A673 (cell line): ENCODE measurements at regions of chr7 and their contacts with region 1.

Region 1: DNA sequence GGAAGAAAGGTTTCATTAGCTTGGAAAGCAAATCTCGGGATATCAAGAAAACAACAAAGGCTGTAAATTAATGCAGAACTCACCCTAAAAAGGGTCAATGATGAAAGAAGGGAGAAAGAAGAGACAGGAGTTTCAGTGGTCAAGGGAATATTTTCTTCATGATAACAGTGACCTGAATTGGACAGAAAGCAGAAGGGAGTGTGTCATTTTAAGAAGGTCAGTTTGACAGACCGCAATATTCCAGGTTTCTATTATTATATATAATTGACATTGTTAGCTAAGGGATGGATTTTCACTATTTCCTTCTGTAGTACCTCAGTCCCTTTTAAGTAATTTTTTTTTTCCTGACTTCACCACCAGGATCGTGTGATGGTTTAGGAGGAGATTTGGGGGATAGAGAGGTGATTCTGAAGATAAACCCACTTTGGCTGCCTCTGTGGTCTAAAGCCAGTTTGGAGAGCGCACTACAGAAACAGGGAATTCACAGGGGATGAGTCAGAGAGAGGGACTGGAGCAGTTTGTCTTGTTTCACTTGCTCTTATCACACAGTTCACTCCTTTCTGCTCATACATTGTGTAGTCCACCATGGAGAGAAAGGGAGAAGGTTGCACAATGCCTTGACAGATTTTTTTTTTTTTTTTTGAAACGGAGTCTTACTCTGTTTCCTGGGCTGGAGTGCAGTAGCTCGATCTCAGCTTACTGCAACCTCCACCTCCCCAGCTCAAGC is 417.9 kb downstream of the AUTS2 start:
- DNase-seq: no peak
- H3K4me3 ChIP-seq: no peak overlapping the region
- H3K27ac ChIP-seq: no peak overlapping the region
- H3K4me1 ChIP-seq: no peaks in the 10 kb centered on the region
- H3K27me3 ChIP-seq: no peaks in the 10 kb centered on the region
- CTCF ChIP-seq: no peak

Region 2: GRCh38 chr7:69115788-69116187 is 900.4 kb before region 1 on chr7:
- CTCF ChIA-PET with region 1: no interaction called
- POLR2A ChIA-PET with region 1: interaction called, 15 read pairs
- intact Hi-C with region 1: no loop called
- DNase-seq: no peak
- H3K4me3 ChIP-seq: no peak overlapping the region
- H3K27ac ChIP-seq: no peak overlapping the region
- H3K4me1 ChIP-seq: no peaks in the 10 kb centered on the region
- H3K27me3 ChIP-seq: no peaks in the 10 kb centered on the region
- CTCF ChIP-seq: no peak

Region 3: DNA sequence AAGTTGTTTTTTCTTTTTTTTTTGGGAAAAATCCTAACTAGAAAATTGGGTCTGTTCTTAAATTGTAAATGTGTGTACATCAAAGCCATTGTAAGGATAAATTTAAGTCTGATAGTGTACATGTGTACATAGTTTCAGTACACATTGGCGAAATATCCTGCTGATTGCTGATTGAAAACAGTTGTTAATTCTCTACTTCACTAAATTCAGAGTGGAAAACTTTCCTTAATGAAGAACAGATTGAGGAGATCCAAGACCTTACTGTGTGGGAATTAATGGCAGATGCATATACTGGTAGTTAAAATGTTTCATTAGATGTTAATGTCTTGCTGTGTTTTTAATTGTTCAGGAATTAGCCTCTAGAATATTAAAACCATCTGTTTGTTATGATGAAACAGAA is 88.0 kb after region 1 on chr7:
- CTCF ChIA-PET with region 1: no interaction called
- POLR2A ChIA-PET with region 1: no interaction called
- intact Hi-C with region 1: no loop called
- DNase-seq: peak; percentile 38
- H3K4me3 ChIP-seq: no peak overlapping the region
- H3K27ac ChIP-seq: no peak overlapping the region
- H3K4me1 ChIP-seq: peaks cover 9% of the 10 kb centered on the region
- H3K27me3 ChIP-seq: peaks cover 34% of the 10 kb centered on the region
- CTCF ChIP-seq: no peak